ENCODE measurements at regions of chr16 and their contacts with region 1.

Region 1: DNA sequence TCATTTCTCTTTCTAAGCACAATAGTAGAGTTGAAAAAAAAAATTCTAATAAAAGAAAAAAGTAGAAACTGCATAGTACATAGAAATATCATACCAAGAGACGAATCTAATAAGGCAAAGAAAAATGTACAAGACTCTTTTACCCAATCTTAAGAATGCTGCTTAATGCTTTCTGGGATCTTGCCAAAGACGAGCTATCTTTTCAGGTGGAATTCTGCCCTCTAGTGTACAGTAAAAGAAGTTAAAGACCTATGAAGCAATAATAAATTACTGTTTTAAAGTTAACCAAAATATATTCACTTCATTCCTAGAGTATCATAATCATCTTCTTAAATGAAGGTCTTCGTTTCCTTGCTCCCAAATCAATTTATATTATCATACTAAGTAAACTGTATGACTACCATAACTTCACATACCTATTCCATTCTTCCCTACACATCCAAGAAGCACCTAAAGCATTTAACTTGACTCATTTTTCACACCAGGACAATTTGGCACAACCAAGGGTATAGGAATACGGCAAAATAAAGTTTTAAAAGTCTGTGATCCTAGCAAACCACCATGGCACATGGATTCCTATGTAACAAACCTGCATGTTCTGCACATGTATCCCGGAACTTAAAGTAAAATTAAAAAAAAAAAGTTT is 47.7 kb downstream of the CFDP1 start:
- DNase-seq: no peak
- ATAC-seq: peak; percentile 22

Region 2: GRCh38 chr16:75234856-75235696 is 150.6 kb before region 1 on chr16:
- intact Hi-C with region 1: loop called (anchors 5 kb)
- DNase-seq: no peak
- ATAC-seq: no peak